IMR-90 (cell line): ENCODE measurements at regions of chr5 and their contacts with region 1.

Region 1: DNA sequence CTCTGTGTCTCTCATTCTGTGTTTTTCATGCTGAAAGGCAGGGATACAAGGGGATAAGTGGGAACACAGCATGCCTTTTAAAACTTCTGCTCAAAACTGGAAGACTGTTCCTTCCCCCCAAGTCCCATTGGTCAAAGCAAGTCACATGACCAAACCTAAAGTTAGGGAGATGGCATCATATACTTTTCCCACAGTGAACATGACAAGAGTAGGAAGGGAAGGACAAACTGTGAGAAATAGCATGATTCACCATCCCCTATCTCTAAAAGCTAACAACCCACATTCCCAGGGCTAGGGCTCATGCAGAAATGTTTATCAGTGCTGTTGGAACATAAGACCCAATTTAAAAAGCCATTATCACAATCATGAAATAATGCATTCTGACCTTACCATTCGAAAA is 24.2 kb upstream of the SHISAL2B start:
- DNase-seq: peak; percentile 93
- ATAC-seq: peak; percentile 94
- H3K4me3 ChIP-seq: no peak overlapping the region
- H3K27ac ChIP-seq: peak overlapping the region; percentile 74; the same call in 1 of the 2 replicates
- H3K4me1 ChIP-seq: peaks cover 3% of the 10 kb centered on the region; the same call in 1 of the 2 replicates
- H3K27me3 ChIP-seq: peaks cover 2% of the 10 kb centered on the region
- CTCF ChIP-seq: no peak
- POLR2A ChIP-seq: no peak
- RAD21 ChIP-seq: no peak

Region 2: DNA sequence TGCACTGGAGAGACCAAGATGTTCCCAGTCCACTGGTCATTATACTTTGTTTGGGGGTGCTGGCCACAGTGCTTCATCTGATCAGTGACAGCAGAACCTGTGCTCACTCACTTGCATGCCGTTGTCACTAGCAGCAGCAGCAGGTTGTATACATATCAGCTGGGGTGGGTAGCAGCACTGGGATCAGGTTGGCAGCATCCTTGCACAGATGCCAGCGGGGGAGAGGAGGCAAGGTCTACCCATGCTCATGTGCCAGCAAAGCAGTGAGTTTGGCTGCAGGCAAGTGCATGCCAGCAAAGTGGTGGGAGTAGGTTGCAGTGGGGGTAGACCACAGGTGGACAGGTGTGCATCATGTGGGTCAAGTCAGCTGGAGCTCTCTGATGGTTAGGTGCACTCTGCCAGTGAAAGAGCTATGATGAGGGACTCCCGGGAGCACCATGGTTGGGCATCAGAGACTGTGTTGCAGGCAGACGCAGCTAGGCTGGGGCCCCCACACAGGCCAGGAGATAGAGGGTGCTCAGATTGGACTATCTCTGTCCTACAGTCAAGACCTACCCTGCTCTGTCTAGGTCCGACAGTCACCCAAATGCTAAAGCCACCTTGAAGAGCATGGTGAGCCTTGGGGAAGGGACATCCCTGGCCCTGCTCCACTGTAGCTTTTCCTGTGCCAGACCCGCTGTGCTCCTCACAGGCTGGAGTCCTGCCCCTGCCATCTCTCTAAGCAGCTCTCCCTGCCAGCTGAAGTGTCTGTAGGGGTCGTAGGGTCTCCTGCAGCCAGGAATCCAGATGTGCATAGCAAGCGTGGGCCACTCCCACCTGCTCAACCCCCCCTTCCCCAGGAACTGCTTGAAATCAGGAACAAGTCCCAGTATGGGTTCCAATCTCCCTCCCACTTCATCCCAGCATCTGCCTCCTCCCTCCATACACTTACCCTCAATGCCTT is 380.6 kb before region 1 on chr5:
- CTCF ChIA-PET with region 1: interaction called, 10 read pairs
- POLR2A ChIA-PET with region 1: no interaction called
- dilution Hi-C with region 1: no loop called
- in situ Hi-C with region 1: no loop called
- intact Hi-C with region 1: no loop called
- DNase-seq: no peak
- ATAC-seq: no peak
- H3K4me3 ChIP-seq: no peak overlapping the region
- H3K27ac ChIP-seq: no peak overlapping the region
- H3K4me1 ChIP-seq: no peaks in the 10 kb centered on the region
- H3K27me3 ChIP-seq: no peaks in the 10 kb centered on the region
- CTCF ChIP-seq: no peak
- POLR2A ChIP-seq: no peak
- RAD21 ChIP-seq: no peak

Region 3: GRCh38 chr5:64722588-64722987 is 56.5 kb after region 1 on chr5:
- CTCF ChIA-PET with region 1: no interaction called
- POLR2A ChIA-PET with region 1: no interaction called
- dilution Hi-C with region 1: no loop called
- in situ Hi-C with region 1: no loop called
- intact Hi-C with region 1: no loop called
- DNase-seq: no peak
- ATAC-seq: no peak
- H3K4me3 ChIP-seq: no peak overlapping the region
- H3K27ac ChIP-seq: no peak overlapping the region
- H3K4me1 ChIP-seq: no peaks in the 10 kb centered on the region
- H3K27me3 ChIP-seq: no peaks in the 10 kb centered on the region
- CTCF ChIP-seq: no peak
- POLR2A ChIP-seq: no peak
- RAD21 ChIP-seq: no peak